ENCODE measurements at regions of chr2 and their contacts with region 1.

Region 1: DNA sequence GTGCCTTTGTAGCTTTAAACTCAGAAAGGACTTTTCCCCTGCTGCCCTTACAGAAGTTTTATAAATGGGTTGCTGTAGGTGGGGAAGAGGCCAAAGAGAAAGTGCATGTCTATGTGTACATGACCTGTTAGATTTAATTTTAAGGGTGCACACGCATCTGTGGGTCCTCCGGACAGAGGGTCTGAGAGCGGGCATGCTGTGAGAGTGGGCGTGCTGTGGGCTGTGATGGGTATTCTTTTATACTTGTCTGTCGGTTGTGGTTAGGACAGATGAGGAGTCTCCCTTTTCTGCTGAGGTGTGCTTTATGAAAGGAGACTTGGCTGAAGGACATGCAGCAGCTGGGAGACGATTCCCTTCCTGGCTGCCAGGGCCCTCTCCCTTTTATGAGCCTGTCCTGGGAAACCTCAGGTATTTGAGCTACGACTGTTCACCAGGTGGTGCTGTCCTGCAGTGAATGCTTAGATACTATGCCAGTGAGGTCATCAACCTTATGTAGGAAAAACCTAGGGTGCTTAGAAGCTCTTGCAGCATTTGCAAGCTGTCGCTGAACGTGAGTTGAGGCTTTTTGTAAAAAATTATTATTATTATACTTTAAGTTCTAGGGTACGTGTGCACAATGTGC is 67.5 kb downstream of the TANC1 start:
- DNase-seq: peak; percentile 70
- H3K4me3 ChIP-seq: no peak overlapping the region
- H3K27ac ChIP-seq: peak overlapping the region; percentile 24 to 42 (median 30)
- H3K4me1 ChIP-seq: peaks cover 2 to 24% (median 12%) of the 10 kb centered on the region in 4 donors
- H3K27me3 ChIP-seq: no peaks in the 10 kb centered on the region
- CTCF ChIP-seq: peak in 4 of 5 experiments; percentile 39 to 75 (median 56)
- EP300 ChIP-seq: no peak
- POLR2A ChIP-seq: no peak

Region 2: DNA sequence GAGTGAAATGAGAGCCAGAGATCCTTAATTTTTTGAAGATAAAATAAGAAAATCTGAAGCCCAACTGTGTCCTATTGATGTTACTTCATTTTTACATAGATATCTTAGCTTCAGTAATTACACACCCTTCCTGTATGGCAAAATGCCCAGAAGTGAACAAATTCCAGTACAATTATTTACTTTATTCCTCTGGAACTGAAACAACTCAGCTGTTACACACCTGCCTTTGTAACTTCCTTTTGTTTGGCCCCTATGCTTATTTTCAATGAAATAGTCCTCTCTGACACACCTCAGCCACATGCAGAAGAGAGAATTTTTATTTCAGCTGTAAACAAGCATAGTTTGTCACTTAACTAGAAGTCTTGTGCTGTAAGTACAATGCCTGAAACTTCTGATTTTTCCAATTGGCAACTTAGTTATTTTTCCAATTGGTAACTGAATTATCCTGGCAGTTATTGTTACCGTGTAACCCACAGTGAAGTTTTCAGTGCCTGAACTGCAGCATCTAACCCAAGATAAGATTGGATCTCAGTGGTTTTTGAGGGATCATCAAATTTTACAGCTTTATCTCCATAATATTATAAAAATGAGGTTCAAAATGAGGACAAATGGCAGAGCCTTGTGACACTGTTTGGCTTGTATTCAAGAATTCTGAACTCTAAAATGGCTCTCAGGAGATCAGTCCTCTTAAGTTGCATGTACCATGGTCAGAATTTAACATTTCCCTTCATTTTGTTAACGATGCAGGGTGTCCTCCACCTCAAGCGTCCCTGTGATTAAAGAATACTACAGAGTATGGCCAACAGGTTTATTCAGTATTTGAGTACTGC is 496.5 kb before region 1 on chr2:
- in situ Hi-C with region 1: no loop called
- intact Hi-C with region 1: no loop called
- DNase-seq: no peak
- H3K4me3 ChIP-seq: no peak overlapping the region
- H3K27ac ChIP-seq: peak overlapping the region; percentile 54 to 71 (median 60)
- H3K4me1 ChIP-seq: peaks cover 0 to 16% (median 7%) of the 10 kb centered on the region in 4 donors
- H3K27me3 ChIP-seq: no peaks in the 10 kb centered on the region
- CTCF ChIP-seq: no peak
- EP300 ChIP-seq: no peak
- POLR2A ChIP-seq: no peak

Region 3: DNA sequence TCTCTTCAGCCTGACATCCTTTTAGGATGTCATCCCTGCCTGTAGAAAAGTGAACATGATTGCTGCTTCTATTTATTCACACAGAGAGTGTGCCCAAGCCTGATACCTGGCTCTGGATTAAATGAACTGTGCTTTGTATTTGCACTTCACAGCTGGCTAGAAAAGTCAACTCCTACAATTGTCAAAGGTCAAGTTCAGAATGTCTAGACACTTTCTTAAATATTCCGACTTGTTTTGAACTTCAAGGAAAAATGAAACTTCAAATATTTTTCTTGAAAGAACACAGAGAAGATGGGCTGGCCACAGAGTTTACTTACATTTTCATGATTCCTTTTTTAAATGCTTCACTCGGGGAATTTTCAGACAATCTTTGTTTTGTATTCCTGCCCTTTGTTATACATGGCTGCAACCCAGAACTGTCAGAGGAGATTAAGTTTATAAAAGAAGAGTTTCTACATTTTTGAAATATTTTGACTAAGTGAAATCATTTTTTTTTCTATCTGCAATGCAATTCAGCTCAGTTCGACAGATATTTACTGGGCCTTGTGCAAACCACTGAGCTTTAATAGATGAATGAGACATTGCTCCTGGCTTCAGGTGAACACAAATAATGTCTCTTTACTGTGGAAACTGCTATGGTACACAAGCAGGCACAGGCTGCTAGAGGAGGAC is 207.3 kb before region 1 on chr2:
- in situ Hi-C with region 1: no loop called
- intact Hi-C with region 1: no loop called
- DNase-seq: no peak
- H3K4me3 ChIP-seq: no peak overlapping the region
- H3K27ac ChIP-seq: no peak overlapping the region
- H3K4me1 ChIP-seq: peaks cover 0 to 4% (median 0%) of the 10 kb centered on the region in 4 donors
- H3K27me3 ChIP-seq: no peaks in the 10 kb centered on the region
- CTCF ChIP-seq: no peak
- EP300 ChIP-seq: no peak
- POLR2A ChIP-seq: no peak

Region 4: DNA sequence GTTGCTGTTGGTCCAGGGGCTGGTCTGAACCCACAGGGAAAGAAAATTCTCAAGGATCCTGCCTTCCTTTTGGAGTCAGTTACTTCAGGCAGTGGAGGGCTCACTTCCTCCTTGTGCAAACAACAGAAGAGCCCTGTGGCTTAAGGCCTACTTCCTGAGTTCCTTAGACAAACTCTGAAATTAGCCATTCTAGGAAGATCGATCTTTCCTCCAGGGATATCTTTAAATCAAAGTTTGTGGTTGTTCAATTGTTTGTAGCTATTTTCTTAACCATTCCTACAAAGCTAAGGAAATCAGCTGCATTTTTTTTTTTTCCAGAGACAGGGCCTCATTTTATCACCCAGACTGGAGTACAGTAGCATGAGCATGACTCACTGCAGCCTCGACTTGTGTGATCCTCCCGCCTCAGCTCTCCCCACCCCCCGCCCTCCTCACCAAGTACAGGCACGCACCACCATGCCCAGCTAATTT is 88.6 kb after region 1 on chr2:
- in situ Hi-C with region 1: loop called in 1 of 4 experiments (anchors 10 kb)
- intact Hi-C with region 1: no loop called
- DNase-seq: peak; percentile 63
- H3K4me3 ChIP-seq: no peak overlapping the region
- H3K27ac ChIP-seq: peak overlapping the region; percentile 78 to 82 (median 79)
- H3K4me1 ChIP-seq: peaks cover 12 to 45% (median 27%) of the 10 kb centered on the region in 4 donors
- H3K27me3 ChIP-seq: no peaks in the 10 kb centered on the region
- CTCF ChIP-seq: no peak
- EP300 ChIP-seq: no peak
- POLR2A ChIP-seq: no peak

Measured in transverse colon (tissue), 4 donors.